Posterior vena cava (tissue), 2 donors: ENCODE measurements at regions of chr5 and their contacts with region 1.

Region 1: DNA sequence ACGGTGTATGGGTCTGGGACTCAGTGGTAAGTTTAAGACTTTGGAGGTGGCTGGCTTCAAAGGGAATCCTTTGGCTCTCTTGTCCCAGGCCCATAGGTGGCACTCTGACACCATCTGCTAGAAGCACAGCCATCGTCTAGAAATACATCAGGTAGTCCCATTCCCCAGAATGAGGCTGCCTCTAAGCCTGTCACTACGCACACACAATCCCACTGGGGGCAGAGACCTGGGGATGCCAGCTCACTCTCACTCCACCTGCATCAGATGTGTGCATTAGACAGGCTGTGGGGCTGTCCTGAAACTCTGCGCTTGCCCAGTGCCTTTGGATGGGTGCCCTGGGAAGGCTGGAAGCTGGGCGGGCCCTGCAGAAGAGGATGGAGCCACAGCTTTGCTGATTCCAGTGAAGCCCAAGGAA is 127.5 kb upstream of the PANK3 start:
- DNase-seq: peak; percentile 83

Region 2: DNA sequence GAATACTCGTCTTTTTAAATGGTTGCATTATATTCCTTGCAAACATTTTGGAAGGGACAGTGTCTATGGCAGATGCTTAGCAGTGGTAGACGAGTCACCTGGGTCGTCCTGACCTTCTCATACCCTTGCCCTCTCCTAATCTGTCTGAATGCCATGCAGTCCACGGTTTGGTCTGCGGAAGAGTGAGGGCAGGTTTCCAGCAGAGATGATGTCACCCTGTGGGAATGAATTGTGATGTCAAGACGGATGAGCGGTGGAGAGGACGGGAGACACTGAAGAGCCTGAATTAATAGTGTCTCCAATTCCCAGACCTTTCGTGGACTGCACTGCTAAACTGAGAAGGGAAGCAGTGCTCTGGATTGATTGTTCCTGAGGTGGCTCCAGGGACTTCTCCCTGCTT is 201.5 kb after region 1 on chr5:
- intact Hi-C with region 1: no loop called
- DNase-seq: no peak

Region 3: GRCh38 chr5:169302491-169303118 is 595.9 kb after region 1 on chr5:
- intact Hi-C with region 1: loop called in 1 of 2 experiments (anchors 10 kb)
- DNase-seq: peak; percentile 91

Region 4: DNA sequence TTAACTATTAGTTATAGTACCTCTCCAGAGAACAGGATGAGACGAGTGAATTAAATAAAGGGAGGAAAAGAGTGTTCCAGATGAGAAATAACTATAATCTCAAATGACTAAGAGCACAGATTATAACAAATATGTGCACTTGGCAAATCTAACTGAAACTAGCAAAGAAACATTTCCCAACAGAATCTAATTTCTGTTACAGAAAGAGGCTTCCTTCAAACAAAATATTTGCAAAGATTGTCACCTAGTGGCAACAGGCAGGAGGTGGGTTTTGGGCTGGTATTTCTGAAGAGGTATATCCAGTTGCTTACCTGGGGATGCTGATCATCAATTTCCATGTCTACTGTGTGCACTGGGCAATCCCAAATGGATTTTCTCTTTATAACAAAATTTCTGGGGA is 871.3 kb after region 1 on chr5:
- intact Hi-C with region 1: loop called in 1 of 2 experiments (anchors 10 kb)
- DNase-seq: no peak